Calu3 (cell line): ENCODE measurements at regions of chr3 and their contacts with region 1.

Region 1: DNA sequence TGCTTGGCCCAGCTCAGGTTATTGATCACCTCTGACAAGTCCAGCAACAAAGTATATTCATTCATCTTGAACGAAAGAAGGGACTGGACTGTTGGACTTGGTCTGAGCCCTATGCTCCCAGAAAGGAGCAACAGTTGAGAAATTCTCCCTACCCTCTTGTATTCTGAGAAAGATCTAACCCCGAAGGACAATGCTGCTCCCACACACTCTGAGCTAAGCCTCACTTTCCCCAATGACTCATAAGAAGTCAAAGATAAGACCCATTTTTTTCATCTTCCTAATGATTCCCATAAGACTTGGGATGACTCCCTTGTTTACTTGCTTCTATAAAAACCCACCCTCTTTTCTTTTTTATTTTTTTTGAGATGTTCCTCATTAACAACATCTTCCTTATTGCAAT is 549.4 kb upstream of the MDFIC2 start:
- DNase-seq: no peak
- H3K4me3 Mint-ChIP-seq: no peak overlapping the region
- H3K27ac Mint-ChIP-seq: peak overlapping the region; percentile 7
- H3K4me1 Mint-ChIP-seq: peaks cover 3% of the 10 kb centered on the region
- H3K27me3 Mint-ChIP-seq: no peaks in the 10 kb centered on the region
- CTCF ChIP-seq: no peak

Region 2: DNA sequence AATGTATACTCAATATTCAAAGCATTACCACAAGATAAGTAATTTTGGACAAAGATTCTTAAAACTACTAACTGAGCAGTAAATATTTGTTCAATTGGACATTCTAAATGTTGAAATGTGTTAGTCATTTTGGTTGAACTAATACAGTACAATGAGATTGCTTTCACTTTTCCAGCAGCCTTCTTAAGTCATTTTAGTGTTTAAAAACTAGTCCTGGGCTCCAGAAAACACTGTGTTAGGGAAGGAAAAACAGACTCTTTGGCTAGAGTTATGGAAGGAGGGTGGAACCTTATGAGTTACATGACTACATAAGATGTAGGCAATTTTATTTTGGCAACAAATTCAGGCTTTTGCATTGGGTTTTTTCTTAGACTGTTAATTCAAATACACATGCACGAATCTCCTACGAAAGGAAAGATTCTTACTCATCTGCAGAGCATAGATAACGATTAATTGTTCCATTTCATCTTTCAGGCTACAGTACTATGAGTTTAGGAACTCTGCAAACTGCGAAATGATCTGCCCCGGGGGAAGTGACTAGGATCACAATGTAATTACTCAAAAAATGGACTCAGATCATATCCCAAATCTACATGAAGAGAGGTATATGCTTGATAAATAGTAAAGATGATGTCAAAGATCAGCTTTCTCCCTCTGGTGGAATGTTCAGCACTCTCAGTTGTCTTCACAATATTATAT is 56.6 kb before region 1 on chr3:
- CTCF ChIA-PET with region 1: no interaction called
- intact Hi-C with region 1: loop called (anchors 10 kb)
- DNase-seq: no peak
- H3K4me3 Mint-ChIP-seq: no peak overlapping the region
- H3K27ac Mint-ChIP-seq: no peak overlapping the region
- H3K4me1 Mint-ChIP-seq: no peaks in the 10 kb centered on the region
- H3K27me3 Mint-ChIP-seq: no peaks in the 10 kb centered on the region
- CTCF ChIP-seq: no peak

Region 3: GRCh38 chr3:71103430-71103921 is 241.6 kb after region 1 on chr3:
- CTCF ChIA-PET with region 1: no interaction called
- intact Hi-C with region 1: no loop called
- DNase-seq: peak; percentile 71
- H3K4me3 Mint-ChIP-seq: no peak overlapping the region
- H3K27ac Mint-ChIP-seq: no peak overlapping the region
- H3K4me1 Mint-ChIP-seq: peaks cover 27% of the 10 kb centered on the region
- H3K27me3 Mint-ChIP-seq: no peaks in the 10 kb centered on the region
- CTCF ChIP-seq: no peak